ENCODE measurements at regions of chr1 and their contacts with region 1.

Region 1: GRCh38 chr1:187985897-187986654 is 1157.3 kb downstream of the PLA2G4A start:
- DNase-seq: peak; percentile 48
- ATAC-seq: peak; percentile 87
- H3K4me3 ChIP-seq: no peak overlapping the region
- H3K27ac ChIP-seq: peak overlapping the region; percentile 69
- H3K4me1 ChIP-seq: peaks cover 11% of the 10 kb centered on the region
- H3K27me3 ChIP-seq: no peaks in the 10 kb centered on the region
- CTCF ChIP-seq: no peak
- EP300 ChIP-seq: peak; percentile 81 to 84
- POLR2A ChIP-seq: no peak
- RAD21 ChIP-seq: no peak

Region 2: GRCh38 chr1:187877220-187877619 is 108.9 kb before region 1 on chr1:
- CTCF ChIA-PET with region 1: no interaction called
- POLR2A ChIA-PET with region 1: no interaction called
- RAD21 ChIA-PET with region 1: no interaction called
- SMC1A ChIA-PET with region 1: no interaction called
- in situ Hi-C with region 1: no loop called
- intact Hi-C with region 1: loop called (anchors 5 kb)
- DNase-seq: no peak
- ATAC-seq: no peak
- H3K4me3 ChIP-seq: no peak overlapping the region
- H3K27ac ChIP-seq: no peak overlapping the region
- H3K4me1 ChIP-seq: no peaks in the 10 kb centered on the region
- H3K27me3 ChIP-seq: no peaks in the 10 kb centered on the region
- CTCF ChIP-seq: no peak
- EP300 ChIP-seq: no peak
- POLR2A ChIP-seq: no peak
- RAD21 ChIP-seq: no peak

Region 3: DNA sequence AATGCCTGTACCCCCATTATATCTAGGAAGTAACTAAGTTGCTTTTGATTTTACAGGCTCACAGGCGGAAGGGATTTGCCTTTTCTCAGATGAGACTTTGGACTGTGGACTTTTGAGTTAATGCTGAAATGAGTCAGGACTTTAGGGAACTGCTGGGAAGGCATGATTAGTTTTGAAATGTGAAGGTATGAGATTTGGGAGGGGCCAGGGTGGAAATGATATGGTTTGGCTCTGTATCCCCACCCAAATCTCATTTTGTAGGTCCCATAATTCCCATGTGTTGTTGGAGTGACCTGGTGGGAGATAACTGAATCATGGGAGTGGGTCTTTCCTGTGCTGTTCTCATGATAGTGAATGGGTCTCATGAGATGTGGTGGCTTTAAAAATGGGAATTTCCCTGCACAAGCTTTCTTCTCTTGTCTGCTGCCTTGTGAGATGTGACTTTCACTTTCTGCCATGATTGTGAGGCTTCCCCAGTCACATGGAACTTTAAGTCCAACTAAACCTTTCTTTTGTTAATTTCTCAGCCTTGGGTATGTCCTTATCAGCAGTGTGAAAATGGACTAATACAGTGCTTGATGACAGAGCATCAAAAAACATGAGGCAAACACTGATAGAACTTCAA is 37.8 kb before region 1 on chr1:
- CTCF ChIA-PET with region 1: no interaction called
- POLR2A ChIA-PET with region 1: no interaction called
- RAD21 ChIA-PET with region 1: interaction called, 3 read pairs
- SMC1A ChIA-PET with region 1: interaction called, 5 read pairs
- in situ Hi-C with region 1: no loop called
- intact Hi-C with region 1: loop called (anchors 5 kb)
- DNase-seq: peak; percentile 32
- ATAC-seq: peak; percentile 65
- H3K4me3 ChIP-seq: no peak overlapping the region
- H3K27ac ChIP-seq: no peak overlapping the region
- H3K4me1 ChIP-seq: no peaks in the 10 kb centered on the region
- H3K27me3 ChIP-seq: no peaks in the 10 kb centered on the region
- CTCF ChIP-seq: no peak
- EP300 ChIP-seq: no peak
- POLR2A ChIP-seq: no peak
- RAD21 ChIP-seq: no peak

Region 4: DNA sequence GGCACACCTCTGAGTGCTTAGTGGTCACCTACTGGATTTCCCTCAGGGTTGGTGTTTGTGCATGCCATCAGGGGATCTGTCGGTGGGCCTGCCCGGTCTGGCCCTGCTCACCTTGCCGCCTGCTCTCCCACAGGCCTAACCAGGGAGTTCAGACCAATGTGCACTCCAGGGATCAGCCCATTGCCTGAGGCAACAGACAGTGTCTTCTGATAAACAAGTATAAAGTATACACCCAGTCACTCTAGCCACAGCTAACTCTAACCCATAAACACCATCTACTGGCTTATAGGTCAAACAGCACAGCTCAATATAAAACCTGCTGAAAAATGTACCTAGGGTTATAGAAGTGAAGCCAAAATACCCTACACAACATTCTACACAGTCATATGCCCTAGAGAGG is 142.7 kb after region 1 on chr1:
- CTCF ChIA-PET with region 1: no interaction called
- POLR2A ChIA-PET with region 1: no interaction called
- RAD21 ChIA-PET with region 1: no interaction called
- SMC1A ChIA-PET with region 1: interaction called, 3 read pairs
- in situ Hi-C with region 1: no loop called
- intact Hi-C with region 1: loop called (anchors 5 kb)
- DNase-seq: no peak
- ATAC-seq: peak; percentile 69
- H3K4me3 ChIP-seq: no peak overlapping the region
- H3K27ac ChIP-seq: no peak overlapping the region
- H3K4me1 ChIP-seq: no peaks in the 10 kb centered on the region
- H3K27me3 ChIP-seq: no peaks in the 10 kb centered on the region
- CTCF ChIP-seq: peak in 1 of 3 experiments; percentile 19; a peak in 1 of 6 replicates
- EP300 ChIP-seq: no peak
- POLR2A ChIP-seq: no peak
- RAD21 ChIP-seq: peak; percentile 66